ENCODE measurements at regions of chr5 and their contacts with region 1.

Region 1: DNA sequence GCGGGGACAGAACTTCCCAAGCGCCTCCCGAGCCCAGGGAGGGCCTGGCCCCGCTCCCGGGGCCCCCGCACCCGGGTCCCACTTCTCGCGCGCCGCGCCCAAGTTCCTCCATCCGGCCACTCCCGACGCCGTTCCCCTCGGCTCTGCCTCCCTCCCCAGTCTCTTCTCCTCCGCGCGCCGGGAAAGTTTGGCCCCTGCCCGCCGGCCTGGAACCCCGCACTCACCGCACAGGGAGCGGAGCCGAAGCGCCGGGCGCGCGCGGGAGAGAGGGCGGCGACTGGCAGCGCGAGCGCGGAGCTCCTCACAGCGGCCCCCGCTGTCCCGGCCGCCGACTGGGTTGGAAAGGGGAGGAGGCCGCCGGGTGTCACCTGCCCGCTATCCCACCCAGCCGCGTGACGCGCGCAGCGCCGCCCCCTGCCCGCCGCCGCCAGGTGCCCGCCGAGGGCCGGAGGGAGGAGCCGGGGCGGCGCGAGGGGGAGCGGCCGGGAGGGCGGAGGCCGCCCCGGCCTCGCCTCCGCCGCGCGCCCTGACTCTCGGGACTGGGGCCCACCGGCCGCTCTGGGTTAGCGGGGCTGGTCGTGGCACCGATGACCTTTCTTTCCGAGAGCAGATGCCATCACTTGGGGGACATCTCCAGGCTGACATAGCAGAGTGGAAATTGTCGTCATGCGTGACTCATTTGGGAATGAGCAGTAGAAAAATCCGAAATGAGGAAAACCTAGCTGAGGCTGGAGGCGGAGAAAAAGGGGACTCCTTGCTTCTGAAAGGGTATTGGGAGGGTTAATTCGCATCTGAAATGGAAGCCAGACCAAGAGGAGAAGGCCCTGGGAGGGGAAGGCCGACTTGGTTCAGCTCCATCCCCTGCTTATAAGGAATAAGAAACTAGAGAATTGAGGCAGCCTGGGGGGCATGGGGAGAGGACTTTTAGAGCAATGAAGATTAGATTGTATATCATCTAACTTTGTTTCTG is at the start of gene ELOVL7:
- DNase-seq: peak; percentile 66
- ATAC-seq: peak; percentile 98
- H3K4me3 ChIP-seq: peak within 1 kb of the TSS; percentile 74 to 84
- H3K27ac ChIP-seq: peak within 1 kb of the TSS; percentile 59; the same call in 1 of the 2 replicates
- H3K4me1 ChIP-seq: peaks cover 0 to 12% of the 10 kb centered on the region in 2 experiments; a peak in 3 of 4 replicates
- H3K27me3 ChIP-seq: no peaks in the 10 kb centered on the region
- CTCF ChIP-seq: peak; percentile 12 to 45 (median 25); a peak in 3 of 6 replicates
- POLR2A ChIP-seq: peak; percentile 86
- RAD21 ChIP-seq: peak; percentile 56
- total RNA-seq, gene ELOVL7: 20.0 TPM

Region 2: GRCh38 chr5:59937633-59938032 is 906.6 kb before region 1 on chr5:
- CTCF ChIA-PET with region 1: no interaction called
- POLR2A ChIA-PET with region 1: no interaction called
- RAD21 ChIA-PET with region 1: no interaction called
- intact Hi-C with region 1: no loop called
- DNase-seq: no peak
- ATAC-seq: no peak
- H3K4me3 ChIP-seq: no peak overlapping the region
- H3K27ac ChIP-seq: no peak overlapping the region
- H3K4me1 ChIP-seq: no peaks in the 10 kb centered on the region
- H3K27me3 ChIP-seq: no peaks in the 10 kb centered on the region; the same call in 1 of the 2 replicates
- CTCF ChIP-seq: no peak
- POLR2A ChIP-seq: no peak
- RAD21 ChIP-seq: no peak

Region 3: DNA sequence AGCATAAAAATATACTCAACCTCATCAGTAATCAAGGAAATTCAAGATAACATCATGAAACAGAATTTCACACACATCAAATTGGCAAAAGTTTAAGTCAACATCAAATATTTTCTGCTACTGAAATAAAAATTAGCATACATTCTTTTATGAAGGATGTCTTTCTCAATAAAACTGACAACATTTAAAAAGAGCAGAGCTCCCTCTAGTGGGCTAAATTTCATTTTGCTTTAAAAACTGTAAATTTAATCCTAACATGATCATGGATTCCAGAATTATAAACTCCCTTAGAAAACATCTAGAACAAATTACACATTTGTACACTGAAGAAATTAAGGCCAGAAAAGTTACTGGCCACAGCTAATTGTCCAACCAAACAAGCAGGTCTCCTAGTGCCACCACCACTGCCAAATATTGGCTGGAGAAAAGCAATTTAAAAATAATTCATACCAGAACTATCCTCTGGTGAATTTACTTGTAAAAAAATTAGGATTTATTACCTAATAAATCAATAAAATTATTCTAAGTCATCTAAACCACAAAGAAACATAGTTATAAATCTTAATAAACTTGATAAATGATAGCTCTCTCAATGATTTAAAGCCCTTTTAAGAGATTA is 175.4 kb before region 1 on chr5:
- CTCF ChIA-PET with region 1: no interaction called
- POLR2A ChIA-PET with region 1: no interaction called
- RAD21 ChIA-PET with region 1: no interaction called
- intact Hi-C with region 1: no loop called
- DNase-seq: peak; percentile 31
- ATAC-seq: no peak
- H3K4me3 ChIP-seq: no peak overlapping the region
- H3K27ac ChIP-seq: no peak overlapping the region
- H3K4me1 ChIP-seq: no peaks in the 10 kb centered on the region
- H3K27me3 ChIP-seq: no peaks in the 10 kb centered on the region
- CTCF ChIP-seq: peak; percentile 36 to 75 (median 40); a peak in 4 of 6 replicates
- POLR2A ChIP-seq: no peak
- RAD21 ChIP-seq: peak; percentile 44; the same call in 1 of the 2 replicates

Region 4: GRCh38 chr5:60699530-60700382 is 144.5 kb before region 1 on chr5 and contains the start of gene DEPDC1B:
- CTCF ChIA-PET with region 1: no interaction called
- POLR2A ChIA-PET with region 1: interaction called, 3 read pairs
- RAD21 ChIA-PET with region 1: no interaction called
- intact Hi-C with region 1: loop called (anchors 5 kb)
- DNase-seq: peak; percentile 76
- ATAC-seq: peak; percentile 89
- H3K4me3 ChIP-seq: peak within 1 kb of the TSS; percentile 76 to 93
- H3K27ac ChIP-seq: peak within 1 kb of the TSS; percentile 87
- H3K4me1 ChIP-seq: peaks cover 2 to 27% of the 10 kb centered on the region in 2 experiments; a peak in 2 of 4 replicates
- H3K27me3 ChIP-seq: no peaks in the 10 kb centered on the region
- CTCF ChIP-seq: peak; percentile 2 to 29 (median 24); a peak in 3 of 6 replicates
- POLR2A ChIP-seq: peak; percentile 85
- RAD21 ChIP-seq: peak; percentile 23; the same call in 1 of the 2 replicates
- total RNA-seq, gene DEPDC1B: 39.7 TPM

Region 5: GRCh38 chr5:60779466-60779865 is 64.8 kb before region 1 on chr5:
- CTCF ChIA-PET with region 1: no interaction called
- POLR2A ChIA-PET with region 1: no interaction called
- RAD21 ChIA-PET with region 1: no interaction called
- intact Hi-C with region 1: loop called (anchors 5 kb)
- DNase-seq: peak; percentile 6
- ATAC-seq: peak; percentile 44
- H3K4me3 ChIP-seq: peak overlapping the region in 1 of 2 experiments; percentile 43; a peak in 1 of 4 replicates
- H3K27ac ChIP-seq: peak overlapping the region; percentile 64; the same call in 1 of the 2 replicates
- H3K4me1 ChIP-seq: peaks cover 25 to 32% of the 10 kb centered on the region in 2 experiments
- H3K27me3 ChIP-seq: no peaks in the 10 kb centered on the region
- CTCF ChIP-seq: no peak
- POLR2A ChIP-seq: no peak
- RAD21 ChIP-seq: no peak